Astrocyte of the cerebellum (primary cell): ENCODE measurements at regions of chr3 and their contacts with region 1.

Region 1: GRCh38 chr3:18264853-18265252 is 160.3 kb downstream of the SATB1 start:
- DNase-seq: no peak
- H3K4me3 ChIP-seq: no peak overlapping the region
- CTCF ChIP-seq: no peak

Region 2: DNA sequence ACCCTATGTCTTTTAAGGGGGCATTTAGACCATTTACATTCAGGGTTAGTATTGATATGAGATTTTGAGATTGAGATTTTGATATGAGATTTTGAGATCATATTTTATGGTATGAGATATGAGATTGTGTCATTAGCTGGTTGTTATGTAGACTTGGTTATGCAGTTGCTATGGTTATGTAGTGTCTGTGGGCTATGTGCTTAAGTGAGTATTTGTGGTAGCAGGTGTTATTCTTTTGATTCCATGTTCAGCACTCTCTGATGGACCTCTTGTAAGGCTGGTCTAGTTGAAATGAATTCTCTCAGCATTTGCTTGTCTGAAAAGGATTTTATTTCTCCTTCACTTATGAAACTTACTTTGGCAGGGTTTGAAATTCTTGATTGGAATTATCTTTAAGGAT is 65.1 kb before region 1 on chr3:
- in situ Hi-C with region 1: loop called (anchors 5 kb)
- DNase-seq: no peak
- H3K4me3 ChIP-seq: no peak overlapping the region
- CTCF ChIP-seq: no peak